Dorsolateral prefrontal cortex (tissue), 120 donors: ENCODE measurements at regions of chr17 and their contacts with region 1.

Region 1: GRCh38 chr17:55308613-55309391 is 44.0 kb downstream of the HLF start:
- DNase-seq: no peak
- H3K4me3 ChIP-seq: no peak overlapping the region
- H3K27ac ChIP-seq: no peak overlapping the region
- H3K27me3 ChIP-seq: no peaks in the 10 kb centered on the region
- CTCF ChIP-seq: no peak

Region 2: GRCh38 chr17:55348749-55349354 is 40.0 kb after region 1 on chr17:
- intact Hi-C with region 1: loop called in 1 of 2 experiments (anchors 5 kb)
- DNase-seq: peak in 8 of 10 donors; percentile 22 to 63 (median 43)
- H3K4me3 ChIP-seq: peak overlapping the region in 3 of 59 donors; percentile 6 to 28 (median 15)
- H3K27ac ChIP-seq: peak overlapping the region in 31 of 59 donors; percentile 11 to 87 (median 60)
- H3K27me3 ChIP-seq: no peaks in the 10 kb centered on the region
- CTCF ChIP-seq: peak; percentile 70 to 94 (median 86)

Region 3: DNA sequence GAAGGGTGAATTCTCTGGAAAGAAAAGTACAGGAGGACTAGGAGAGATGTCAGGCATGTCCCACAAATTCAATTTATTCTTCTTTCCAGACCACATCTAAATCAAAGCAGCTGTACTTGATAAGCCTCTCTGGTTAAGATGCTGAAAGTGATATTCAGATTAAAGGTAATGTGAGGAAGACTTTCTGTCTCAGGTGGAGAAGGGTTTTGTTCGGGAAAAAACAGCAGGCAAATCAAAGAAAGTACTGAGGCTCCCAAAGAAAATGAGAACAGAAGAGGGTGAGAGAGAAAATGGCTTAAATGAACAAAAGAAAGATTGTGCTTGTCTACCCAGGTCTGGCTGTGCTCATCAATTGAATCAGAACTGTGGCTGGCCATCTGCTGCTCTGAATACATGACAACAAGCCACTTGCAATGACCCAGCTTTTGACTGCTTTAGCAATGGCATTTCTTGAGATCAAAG is 57.2 kb after region 1 on chr17:
- intact Hi-C with region 1: no loop called
- DNase-seq: peak in 2 of 10 donors; percentile 46 to 49
- H3K4me3 ChIP-seq: peak overlapping the region in 2 of 59 donors; percentile 15 to 38
- H3K27ac ChIP-seq: peak overlapping the region in 41 of 59 donors; percentile 1 to 81 (median 49)
- H3K27me3 ChIP-seq: no peaks in the 10 kb centered on the region
- CTCF ChIP-seq: no peak